ENCODE measurements at regions of chr11 and their contacts with region 1.

Region 1: DNA sequence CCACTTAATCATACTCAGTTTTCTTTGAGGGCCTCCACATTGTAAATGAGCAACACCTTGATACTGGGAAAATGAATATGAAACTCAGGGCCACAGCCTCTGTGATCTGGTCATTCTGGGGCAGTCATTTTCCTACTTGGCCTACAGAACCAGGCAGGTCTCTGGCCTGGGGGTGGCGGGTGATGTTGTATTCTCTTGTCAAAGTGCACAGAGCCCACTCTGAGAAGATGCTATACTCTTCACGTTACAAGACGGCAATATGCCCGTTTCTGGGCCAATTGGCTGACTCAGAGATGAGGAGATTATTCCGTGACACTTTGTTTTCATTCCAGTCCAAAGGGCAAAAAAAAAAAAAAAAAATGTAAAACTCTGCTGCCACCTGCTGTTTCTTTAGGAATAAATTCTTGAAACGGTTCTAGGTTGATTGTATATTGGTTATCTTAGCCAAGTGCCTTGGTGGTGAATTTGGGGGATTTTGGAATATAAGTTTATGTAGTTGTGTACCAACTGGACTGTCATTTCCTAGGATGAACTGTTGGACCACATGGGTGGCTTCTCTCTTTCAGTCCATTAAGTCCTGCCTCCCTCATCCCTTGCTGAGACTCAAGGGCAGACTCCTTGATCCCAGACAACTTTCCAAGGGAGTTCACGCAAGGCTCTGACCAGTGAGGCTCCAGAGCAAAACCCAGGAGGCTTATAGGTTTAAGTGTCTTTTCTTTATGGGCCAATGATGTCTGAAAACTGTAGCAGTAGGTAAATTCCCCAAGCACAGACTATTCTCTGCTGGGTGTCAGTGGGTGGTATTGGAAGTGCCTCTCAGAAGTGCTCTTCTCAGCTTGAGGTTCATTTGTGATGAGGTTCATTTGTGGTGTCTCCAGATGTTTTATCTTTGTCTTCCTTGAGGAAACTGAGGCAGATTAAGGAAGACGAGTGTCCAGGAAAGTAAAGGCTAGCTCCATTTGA is 18.2 kb downstream of the ADM start:
- DNase-seq: no peak
- H3K4me3 Mint-ChIP-seq: no peak overlapping the region
- H3K27ac Mint-ChIP-seq: peak overlapping the region; percentile 88
- H3K4me1 Mint-ChIP-seq: peaks cover 20% of the 10 kb centered on the region
- H3K27me3 Mint-ChIP-seq: peaks cover 16% of the 10 kb centered on the region

Region 2: GRCh38 chr11:9170450-9170849 is 1152.7 kb before region 1 on chr11:
- intact Hi-C with region 1: loop called (anchors 2 kb)
- DNase-seq: no peak
- H3K4me3 Mint-ChIP-seq: no peak overlapping the region
- H3K27ac Mint-ChIP-seq: no peak overlapping the region
- H3K4me1 Mint-ChIP-seq: peaks cover 10% of the 10 kb centered on the region
- H3K27me3 Mint-ChIP-seq: no peaks in the 10 kb centered on the region

Region 3: DNA sequence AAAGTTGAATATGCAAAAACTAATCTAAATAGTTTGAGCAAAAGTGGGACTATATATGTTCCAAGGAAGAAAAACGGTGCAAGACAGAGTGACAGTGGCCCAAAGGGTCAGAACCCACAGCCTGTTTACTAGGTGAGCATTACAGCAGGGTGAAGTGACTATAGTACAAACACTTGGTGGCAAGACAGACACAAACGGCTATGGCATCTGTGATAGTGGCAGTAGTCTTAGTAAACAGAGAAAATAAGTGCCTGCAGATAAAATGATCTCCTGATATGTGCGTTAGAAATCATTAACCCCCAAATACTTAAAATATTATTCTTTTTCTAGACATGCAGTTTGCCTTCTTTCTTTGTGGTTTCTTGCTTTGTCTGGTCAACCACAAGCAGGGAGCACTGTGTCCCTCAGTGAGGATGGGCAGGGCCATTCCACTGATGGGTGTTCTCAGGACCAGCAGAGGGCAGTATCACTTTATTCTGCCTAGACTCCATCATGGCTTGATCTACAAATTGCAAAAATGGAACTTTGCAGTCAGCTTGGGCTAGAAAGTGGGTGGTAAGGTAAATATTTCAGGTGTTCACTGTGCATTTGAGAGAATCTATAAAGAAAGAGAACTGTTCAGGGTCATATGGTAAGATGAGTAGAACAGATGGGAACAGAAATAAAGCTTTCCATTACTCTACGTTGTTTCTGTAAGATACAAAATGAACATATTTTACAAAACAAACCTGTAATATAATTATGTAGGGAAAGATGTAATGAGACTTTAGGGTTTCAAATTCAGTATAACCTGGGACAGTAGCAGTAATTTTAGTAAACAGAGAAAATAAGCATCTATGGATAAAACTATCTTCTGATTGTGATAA is 461.0 kb before region 1 on chr11:
- intact Hi-C with region 1: loop called (anchors 2 kb)
- DNase-seq: peak; percentile 11
- H3K4me3 Mint-ChIP-seq: no peak overlapping the region
- H3K27ac Mint-ChIP-seq: peak overlapping the region; percentile 1
- H3K4me1 Mint-ChIP-seq: peaks cover 34% of the 10 kb centered on the region
- H3K27me3 Mint-ChIP-seq: peaks cover 4% of the 10 kb centered on the region

Region 4: DNA sequence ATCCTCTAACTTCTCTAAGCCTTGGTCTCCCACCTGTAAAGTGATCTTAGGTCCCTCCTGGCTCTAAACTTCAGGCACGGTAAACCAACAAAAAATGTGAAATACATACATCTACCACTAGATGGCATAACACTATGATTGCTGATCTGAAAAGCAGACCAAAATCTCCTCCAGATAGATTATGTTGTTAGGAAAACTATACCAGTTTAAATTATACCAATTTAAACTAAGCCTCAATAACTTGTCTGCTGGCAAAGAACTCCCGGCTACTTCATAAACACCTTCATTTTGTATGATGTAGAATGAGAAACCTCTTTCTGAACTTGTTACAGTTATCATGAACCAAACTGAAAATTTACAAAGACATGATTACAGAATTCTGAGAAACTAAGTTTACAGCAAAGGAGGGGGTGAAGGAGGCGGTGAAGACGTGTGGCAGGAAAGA is 115.0 kb before region 1 on chr11:
- intact Hi-C with region 1: loop called (anchors 1 kb)
- DNase-seq: no peak
- H3K4me3 Mint-ChIP-seq: no peak overlapping the region
- H3K27ac Mint-ChIP-seq: no peak overlapping the region
- H3K4me1 Mint-ChIP-seq: no peaks in the 10 kb centered on the region
- H3K27me3 Mint-ChIP-seq: peaks cover 11% of the 10 kb centered on the region

Measured in activated T-helper 1 cell treated with anti-CD3 and anti-CD28 coated beads, Interleukin-12 subunit alpha, Interleukin-12 subunit beta, Interleukin-2, Interleukin-4 antibody, amounts not matched to agents 30 ng/mL and 10 ng/mL and 1 ng/mL, durations not matched to agents 14 hours and 24 hours and 36 hours (primary cell).